A549 (cell line): ENCODE measurements at regions of chr9 and their contacts with region 1.

Region 1: GRCh38 chr9:130682490-130683121 is 11.0 kb upstream of the EXOSC2 start:
- DNase-seq: peak; percentile 89 to 91
- ATAC-seq: peak; percentile 71 to 87
- H3K4me3 ChIP-seq: peak overlapping the region; percentile 85
- H3K27ac ChIP-seq: peak overlapping the region; percentile 92; a peak in 5 of 6 replicates
- H3K4me1 ChIP-seq: peaks cover 6% of the 10 kb centered on the region; the same call in 2 of the 3 replicates
- CTCF ChIP-seq: peak; percentile 93
- EP300 ChIP-seq: no peak
- POLR2A ChIP-seq: no peak
- RAD21 ChIP-seq: peak; percentile 94 to 96

Region 2: DNA sequence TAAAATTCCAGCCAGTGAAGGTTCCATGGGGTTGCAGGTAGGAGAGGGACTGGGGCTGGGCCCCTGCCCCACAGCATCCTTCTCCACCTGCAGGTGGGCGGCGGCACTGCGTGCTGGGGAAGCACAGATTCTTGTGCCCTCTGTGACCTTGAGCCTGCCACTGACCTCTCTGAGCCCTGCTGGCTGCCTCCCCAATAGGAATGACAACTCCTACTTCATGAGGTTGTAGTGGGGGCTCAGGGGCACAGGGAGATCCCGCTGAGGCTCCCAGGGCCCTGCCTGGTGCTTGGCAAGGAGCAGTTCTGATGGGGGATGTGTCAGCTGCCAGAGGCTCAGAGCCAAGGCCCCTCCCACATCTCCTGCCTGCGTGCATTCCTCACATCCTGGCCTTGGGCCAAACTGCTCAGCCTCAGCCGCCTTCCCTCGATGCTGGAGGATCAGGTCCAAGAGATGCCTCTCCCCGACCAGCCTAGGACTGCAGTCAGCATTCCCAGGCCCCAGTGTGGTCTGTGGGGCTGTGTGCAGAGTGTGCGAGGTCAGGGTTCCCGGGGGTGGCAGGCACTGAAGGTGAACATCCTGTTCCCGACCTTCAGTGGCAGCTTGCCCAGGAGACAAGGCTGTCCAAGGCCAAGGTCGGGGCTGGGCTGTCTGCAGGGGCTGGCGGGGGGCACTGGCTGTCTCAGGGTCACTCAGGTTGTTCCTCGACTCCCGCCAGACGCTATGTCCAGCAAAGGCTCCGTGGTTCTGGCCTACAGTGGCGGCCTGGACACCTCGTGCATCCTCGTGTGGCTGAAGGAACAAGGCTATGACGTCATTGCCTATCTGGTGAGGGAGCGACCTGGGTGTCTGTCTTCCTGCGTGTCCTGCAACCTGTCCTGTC is 230.9 kb before region 1 on chr9:
- CTCF ChIA-PET with region 1: interaction called, 453 read pairs
- POLR2A ChIA-PET with region 1: no interaction called
- DNase-seq: peak; percentile 70 to 78
- ATAC-seq: peak; percentile 66 to 76
- H3K4me3 ChIP-seq: no peak overlapping the region
- H3K27ac ChIP-seq: peak overlapping the region; percentile 57 to 68; a peak in 3 of 6 replicates
- H3K4me1 ChIP-seq: peaks cover 49% of the 10 kb centered on the region
- CTCF ChIP-seq: peak; percentile 38; the same call in 2 of the 3 replicates
- EP300 ChIP-seq: no peak
- POLR2A ChIP-seq: no peak
- RAD21 ChIP-seq: no peak; a peak in 2 of 5 replicates

Region 3: DNA sequence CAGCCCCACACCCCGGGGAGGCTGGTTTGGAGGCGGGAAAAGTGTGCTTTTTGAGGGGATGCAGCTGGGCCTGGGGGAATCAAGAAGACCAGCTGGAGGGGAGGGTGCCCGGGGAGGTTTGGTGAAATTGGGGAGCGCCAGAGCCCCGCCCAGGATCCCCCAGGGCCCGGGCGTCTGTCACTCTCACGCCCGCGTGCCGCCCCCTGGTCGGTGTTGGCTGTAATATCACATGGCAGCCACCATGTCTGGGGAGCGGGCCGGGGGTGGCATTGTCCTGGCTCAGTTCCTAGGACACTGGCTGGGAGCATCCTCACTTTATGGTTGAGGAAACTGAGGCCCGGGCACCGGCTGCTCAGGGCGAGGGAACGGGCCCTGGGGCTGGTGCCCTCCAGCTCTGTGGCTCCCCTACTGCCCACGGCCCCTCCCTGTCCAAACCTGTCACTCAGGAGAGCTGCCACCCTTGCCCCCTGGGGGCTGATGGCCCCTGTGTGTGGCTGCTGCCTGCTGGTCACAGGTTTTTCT is 210.4 kb before region 1 on chr9:
- CTCF ChIA-PET with region 1: interaction called, 453 read pairs
- POLR2A ChIA-PET with region 1: no interaction called
- DNase-seq: no peak
- ATAC-seq: no peak
- H3K4me3 ChIP-seq: no peak overlapping the region
- H3K27ac ChIP-seq: no peak overlapping the region
- H3K4me1 ChIP-seq: no peaks in the 10 kb centered on the region
- CTCF ChIP-seq: no peak
- EP300 ChIP-seq: no peak
- POLR2A ChIP-seq: no peak
- RAD21 ChIP-seq: no peak

Region 4: GRCh38 chr9:130561056-130561455 is 121.5 kb before region 1 on chr9:
- CTCF ChIA-PET with region 1: no interaction called
- POLR2A ChIA-PET with region 1: no interaction called
- DNase-seq: no peak
- ATAC-seq: no peak
- H3K4me3 ChIP-seq: no peak overlapping the region
- H3K27ac ChIP-seq: no peak overlapping the region
- H3K4me1 ChIP-seq: peaks cover 4% of the 10 kb centered on the region; the same call in 2 of the 3 replicates
- CTCF ChIP-seq: no peak
- EP300 ChIP-seq: no peak
- POLR2A ChIP-seq: no peak
- RAD21 ChIP-seq: no peak

Region 5: DNA sequence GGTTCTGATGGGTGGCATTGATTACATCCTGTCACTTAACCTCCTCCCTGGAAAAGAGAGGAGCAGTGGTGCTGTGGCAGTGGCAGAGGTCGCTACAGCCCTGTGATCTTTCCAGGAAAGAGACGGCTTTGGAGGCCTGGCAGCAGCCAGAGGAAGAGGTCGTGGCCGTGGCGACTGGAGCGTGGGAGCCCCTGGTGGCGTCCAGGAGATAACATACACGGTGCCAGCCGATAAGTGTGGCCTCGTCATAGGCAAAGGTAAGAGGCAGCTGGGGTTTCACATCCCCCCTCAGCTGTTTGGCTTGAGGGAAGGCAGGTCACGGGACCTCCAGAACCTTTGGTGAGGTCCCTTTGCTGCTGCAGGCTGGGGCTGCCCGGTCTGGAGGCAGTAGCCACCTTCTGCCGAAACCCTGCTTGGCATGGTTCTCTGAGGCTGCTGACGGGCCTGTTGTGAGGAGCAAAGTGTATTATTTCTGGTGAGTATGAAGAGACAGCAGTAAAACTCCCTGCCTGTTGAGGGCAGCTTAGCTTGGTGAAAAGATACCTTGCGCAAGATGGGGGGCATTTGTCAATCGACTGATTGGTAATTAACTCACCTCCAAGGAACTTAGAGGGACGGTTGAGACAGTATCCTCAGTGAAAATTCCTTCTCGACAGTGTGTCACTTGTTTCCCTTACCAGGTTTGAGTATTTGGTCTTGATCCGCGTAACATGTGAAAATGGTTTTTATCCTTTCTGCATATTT is 56.2 kb before region 1 on chr9:
- CTCF ChIA-PET with region 1: interaction called, 18 read pairs
- POLR2A ChIA-PET with region 1: no interaction called
- DNase-seq: peak in 1 of 2 experiments; percentile 32
- ATAC-seq: peak; percentile 49 to 61; a peak in 4 of 6 replicates
- H3K4me3 ChIP-seq: no peak overlapping the region
- H3K27ac ChIP-seq: no peak overlapping the region
- H3K4me1 ChIP-seq: no peaks in the 10 kb centered on the region
- CTCF ChIP-seq: no peak
- EP300 ChIP-seq: no peak
- POLR2A ChIP-seq: no peak
- RAD21 ChIP-seq: no peak

Region 6: GRCh38 chr9:130665431-130666392 is 16.9 kb before region 1 on chr9:
- CTCF ChIA-PET with region 1: interaction called, 22 read pairs
- POLR2A ChIA-PET with region 1: no interaction called
- DNase-seq: no peak
- ATAC-seq: no peak
- H3K4me3 ChIP-seq: peak overlapping the region; percentile 27; the same call in 1 of the 3 replicates
- H3K27ac ChIP-seq: no peak overlapping the region
- H3K4me1 ChIP-seq: peaks cover 29% of the 10 kb centered on the region; the same call in 2 of the 3 replicates
- CTCF ChIP-seq: no peak
- EP300 ChIP-seq: no peak
- POLR2A ChIP-seq: no peak
- RAD21 ChIP-seq: no peak

Region 7: GRCh38 chr9:130701056-130702022 is 18.7 kb after region 1 on chr9:
- CTCF ChIA-PET with region 1: interaction called, 102 read pairs
- POLR2A ChIA-PET with region 1: no interaction called
- DNase-seq: peak; percentile 71 to 74
- ATAC-seq: peak; percentile 94 to 98
- H3K4me3 ChIP-seq: no peak overlapping the region
- H3K27ac ChIP-seq: no peak overlapping the region
- H3K4me1 ChIP-seq: no peaks in the 10 kb centered on the region
- CTCF ChIP-seq: peak; percentile 87
- EP300 ChIP-seq: no peak
- POLR2A ChIP-seq: no peak
- RAD21 ChIP-seq: peak; percentile 50 to 57; a peak in 4 of 5 replicates

Region 8: GRCh38 chr9:131037335-131038255 is 355.0 kb after region 1 on chr9:
- CTCF ChIA-PET with region 1: no interaction called
- POLR2A ChIA-PET with region 1: no interaction called
- DNase-seq: no peak
- ATAC-seq: peak; percentile 23 to 59; a peak in 4 of 6 replicates
- H3K4me3 ChIP-seq: no peak overlapping the region
- H3K27ac ChIP-seq: no peak overlapping the region
- H3K4me1 ChIP-seq: no peaks in the 10 kb centered on the region
- CTCF ChIP-seq: no peak
- EP300 ChIP-seq: no peak
- POLR2A ChIP-seq: no peak
- RAD21 ChIP-seq: no peak